CD4-positive, alpha-beta T cell (primary cell): ENCODE measurements at regions of chr5 and their contacts with region 1.

Region 1: DNA sequence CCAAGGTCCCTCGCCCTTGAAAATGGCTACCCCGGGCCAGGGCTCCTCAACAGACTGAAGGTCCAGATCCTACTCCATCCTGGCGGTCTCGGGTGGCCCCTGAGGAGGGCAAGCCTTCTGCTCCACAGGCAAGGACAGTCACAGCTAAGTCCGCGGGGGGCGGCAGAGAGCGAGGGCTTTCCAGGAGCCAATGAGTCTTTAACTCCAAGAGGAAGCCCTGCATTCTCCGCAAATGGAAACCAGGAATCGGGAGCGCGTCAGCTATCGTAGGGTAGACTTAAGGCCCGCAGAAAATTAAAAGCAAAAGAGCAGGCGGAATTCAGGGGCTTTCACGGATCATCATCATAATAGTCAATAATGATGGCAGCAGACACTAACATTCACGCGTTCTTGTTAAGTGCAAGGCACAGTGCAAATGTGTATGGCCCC is 87.8 kb upstream of the TNFAIP8 start:
- DNase-seq: peak; percentile 59 to 93 (median 74)
- ATAC-seq: peak; percentile 76
- H3K4me3 ChIP-seq: peak overlapping the region; percentile 69
- H3K4me3 Mint-ChIP-seq: peak overlapping the region; percentile 99
- H3K27ac ChIP-seq: peak overlapping the region; percentile 89 to 92
- H3K27ac Mint-ChIP-seq: peak overlapping the region; percentile 97
- H3K4me1 ChIP-seq: peaks cover 27% of the 10 kb centered on the region
- H3K4me1 Mint-ChIP-seq: peaks cover 76% of the 10 kb centered on the region
- H3K27me3 ChIP-seq: no peaks in the 10 kb centered on the region
- H3K27me3 Mint-ChIP-seq: no peaks in the 10 kb centered on the region
- CTCF ChIP-seq: peak; percentile 70

Region 2: DNA sequence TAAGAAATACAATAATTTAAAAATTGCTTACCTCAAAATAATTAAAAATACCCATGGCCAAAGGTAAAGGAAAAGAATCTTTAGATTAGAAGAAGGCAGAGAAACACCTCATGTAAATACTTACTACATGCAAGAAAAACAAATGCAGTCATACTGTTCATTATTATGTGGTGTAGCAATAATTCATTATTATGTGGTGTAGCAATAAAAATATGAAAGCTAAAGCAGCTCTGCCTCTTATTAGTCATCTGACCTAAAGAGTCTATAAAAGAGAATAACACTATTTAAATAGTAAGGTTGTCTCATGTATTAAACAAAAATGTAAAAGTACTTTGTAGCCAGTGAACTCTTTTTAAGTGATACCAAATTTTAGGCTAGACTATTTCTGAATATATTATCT is 286.2 kb before region 1 on chr5:
- CTCF ChIA-PET with region 1: no interaction called
- POLR2A ChIA-PET with region 1: no interaction called
- intact Hi-C with region 1: no loop called
- DNase-seq: no peak
- ATAC-seq: no peak
- H3K4me3 ChIP-seq: no peak overlapping the region
- H3K4me3 Mint-ChIP-seq: no peak overlapping the region
- H3K27ac ChIP-seq: no peak overlapping the region
- H3K27ac Mint-ChIP-seq: no peak overlapping the region
- H3K4me1 ChIP-seq: no peaks in the 10 kb centered on the region
- H3K4me1 Mint-ChIP-seq: peaks cover 26% of the 10 kb centered on the region
- H3K27me3 ChIP-seq: no peaks in the 10 kb centered on the region
- H3K27me3 Mint-ChIP-seq: no peaks in the 10 kb centered on the region
- CTCF ChIP-seq: no peak

Region 3: DNA sequence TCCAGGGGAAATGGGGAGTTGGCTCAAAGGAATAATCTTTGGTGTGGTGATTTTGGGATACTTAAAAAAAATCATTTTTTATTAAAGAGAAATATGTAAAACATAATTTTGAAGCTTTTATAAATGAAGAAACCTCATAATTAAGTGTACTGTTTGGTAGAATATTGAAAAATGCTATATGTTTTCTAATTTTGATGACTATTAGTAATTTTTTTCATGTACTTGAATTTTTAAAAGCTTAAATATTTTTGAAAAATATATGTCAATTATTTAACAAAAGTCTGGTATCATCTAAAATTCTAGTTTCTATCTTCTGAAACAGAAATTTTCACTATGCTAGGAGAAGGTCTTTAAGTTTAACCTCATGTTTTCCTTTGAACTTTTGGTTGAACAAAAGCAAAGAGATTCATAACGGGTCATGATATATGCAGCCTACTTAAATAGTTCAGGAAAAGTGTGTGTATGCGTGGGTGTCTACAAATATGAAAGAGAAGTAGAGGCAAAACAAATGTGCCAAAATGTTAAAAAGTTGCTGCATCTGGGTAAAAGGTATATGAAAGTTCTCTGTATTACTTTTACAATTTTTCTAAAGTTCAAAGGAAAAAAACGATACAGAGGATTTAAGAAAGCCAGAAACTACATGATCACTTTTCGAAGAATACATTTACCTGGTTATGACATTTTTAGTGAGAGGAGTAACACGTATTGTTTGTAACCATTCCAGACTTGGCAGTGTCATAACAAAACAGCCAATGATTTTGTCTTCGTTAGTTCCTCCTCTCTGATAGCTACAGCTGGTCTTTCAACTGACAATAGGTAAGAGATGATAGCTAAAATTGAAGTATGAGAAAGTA is 29.5 kb before region 1 on chr5:
- CTCF ChIA-PET with region 1: interaction called, 4 read pairs
- POLR2A ChIA-PET with region 1: interaction called, 9 read pairs
- intact Hi-C with region 1: loop called in 1 of 2 experiments (anchors 2 kb)
- DNase-seq: peak in 3 of 14 experiments; percentile 6 to 40 (median 38)
- ATAC-seq: peak; percentile 94
- H3K4me3 ChIP-seq: no peak overlapping the region
- H3K4me3 Mint-ChIP-seq: peak overlapping the region; percentile 70
- H3K27ac ChIP-seq: peak overlapping the region in 1 of 2 donors; percentile 10
- H3K27ac Mint-ChIP-seq: peak overlapping the region; percentile 97
- H3K4me1 ChIP-seq: no peaks in the 10 kb centered on the region
- H3K4me1 Mint-ChIP-seq: peaks cover 42% of the 10 kb centered on the region
- H3K27me3 ChIP-seq: no peaks in the 10 kb centered on the region
- H3K27me3 Mint-ChIP-seq: no peaks in the 10 kb centered on the region
- CTCF ChIP-seq: no peak

Region 4: DNA sequence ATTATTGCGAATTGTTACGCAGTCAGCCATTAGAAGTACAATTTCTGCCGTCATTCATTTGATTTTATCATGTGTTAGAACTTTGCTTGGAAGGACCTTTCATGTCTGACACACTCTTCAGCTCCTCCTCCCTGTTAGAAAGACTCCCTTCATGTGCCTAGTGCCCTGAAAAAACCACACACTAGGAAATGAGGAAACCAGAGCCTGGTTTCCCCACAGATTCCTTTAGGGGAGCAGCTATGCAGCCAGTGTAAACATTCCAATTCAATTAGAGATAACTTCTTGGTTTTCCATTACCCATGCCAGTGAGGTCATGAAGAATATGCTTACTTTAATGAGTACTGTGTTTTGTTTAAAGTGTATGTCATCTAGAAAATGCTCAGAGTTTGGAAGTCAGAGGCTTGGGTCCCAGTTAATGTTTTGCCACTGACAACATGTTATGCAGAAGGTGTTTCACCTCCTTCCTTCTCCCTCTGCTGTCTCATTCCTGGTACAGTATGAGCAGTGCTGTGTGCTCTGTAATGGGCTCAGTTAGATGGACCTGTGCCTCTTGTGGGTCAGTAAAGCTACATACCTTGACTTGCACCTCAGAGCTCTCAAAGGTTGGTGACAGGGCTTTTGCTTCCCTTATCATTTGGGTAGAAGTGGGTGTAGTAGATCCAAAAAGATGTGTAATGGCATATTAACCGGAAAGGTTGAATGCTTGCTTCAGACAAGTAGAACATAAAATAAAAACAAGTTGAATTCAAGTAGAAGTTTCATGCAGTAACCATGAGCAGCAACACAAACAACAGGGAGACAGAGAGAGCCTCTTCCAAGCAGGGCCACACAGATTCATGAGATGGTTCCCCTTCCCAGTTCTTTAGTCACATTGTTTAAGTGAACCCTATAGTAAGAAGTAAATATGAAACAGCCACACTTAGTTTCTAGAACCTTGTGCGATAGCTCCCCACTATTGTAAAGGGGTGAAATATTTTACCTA is 35.2 kb after region 1 on chr5:
- CTCF ChIA-PET with region 1: interaction called, 3 read pairs
- POLR2A ChIA-PET with region 1: interaction called, 116 read pairs
- intact Hi-C with region 1: loop called (anchors 2 kb)
- DNase-seq: peak in 2 of 14 experiments; percentile 56 to 58
- ATAC-seq: peak; percentile 76
- H3K4me3 ChIP-seq: no peak overlapping the region
- H3K4me3 Mint-ChIP-seq: peak overlapping the region; percentile 73
- H3K27ac ChIP-seq: peak overlapping the region; percentile 54 to 72
- H3K27ac Mint-ChIP-seq: peak overlapping the region; percentile 95
- H3K4me1 ChIP-seq: peaks cover 59% of the 10 kb centered on the region
- H3K4me1 Mint-ChIP-seq: peaks cover 96% of the 10 kb centered on the region
- H3K27me3 ChIP-seq: no peaks in the 10 kb centered on the region
- H3K27me3 Mint-ChIP-seq: no peaks in the 10 kb centered on the region
- CTCF ChIP-seq: no peak

Region 5: DNA sequence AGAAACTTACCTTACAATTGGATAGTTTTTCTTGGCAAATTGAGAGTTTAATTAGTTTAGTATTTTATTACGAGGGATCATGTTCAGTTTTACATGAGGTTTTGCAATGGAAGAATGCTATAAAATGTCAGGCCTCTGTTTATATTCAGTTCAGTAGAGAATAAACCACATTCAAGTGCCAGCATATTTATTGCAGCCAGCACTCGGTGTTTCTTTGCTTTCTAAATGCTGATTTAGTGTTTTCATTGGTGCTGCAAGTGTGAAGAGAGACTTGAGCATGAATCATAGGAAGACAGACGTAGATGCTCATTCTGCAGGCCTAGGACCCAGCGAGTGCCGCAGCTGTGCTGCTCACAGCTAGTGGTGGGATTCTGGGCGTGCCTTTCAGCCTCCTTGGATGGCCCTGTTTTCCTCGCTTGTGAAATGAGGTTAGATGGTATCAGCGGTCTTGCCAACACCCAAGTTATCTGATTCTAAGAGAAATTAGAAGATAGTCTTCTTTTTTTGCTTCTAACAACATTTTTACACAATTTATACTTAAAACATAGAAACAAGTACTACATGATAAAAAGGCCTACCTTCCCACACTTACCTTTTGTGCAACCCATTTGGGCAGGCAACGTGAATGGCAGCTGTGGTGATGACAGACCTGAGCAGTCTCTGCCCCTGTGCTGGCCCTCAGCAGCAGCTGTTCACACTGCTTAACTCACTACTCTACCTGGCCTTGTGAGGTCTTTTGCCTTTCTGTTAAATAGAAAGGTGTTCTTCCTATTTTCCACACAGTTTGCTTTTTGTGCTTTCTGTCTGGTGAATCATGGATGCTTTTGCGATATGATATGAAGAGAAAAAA is 61.0 kb after region 1 on chr5:
- CTCF ChIA-PET with region 1: interaction called, 3 read pairs
- POLR2A ChIA-PET with region 1: interaction called, 84 read pairs
- intact Hi-C with region 1: loop called (anchors 2 kb)
- DNase-seq: peak in 13 of 14 experiments; percentile 45 to 85 (median 67)
- ATAC-seq: peak; percentile 60
- H3K4me3 ChIP-seq: peak overlapping the region; percentile 13
- H3K4me3 Mint-ChIP-seq: peak overlapping the region; percentile 83
- H3K27ac ChIP-seq: peak overlapping the region; percentile 77 to 94
- H3K27ac Mint-ChIP-seq: peak overlapping the region; percentile 97
- H3K4me1 ChIP-seq: peaks cover 84% of the 10 kb centered on the region
- H3K4me1 Mint-ChIP-seq: peaks cover 94% of the 10 kb centered on the region
- H3K27me3 ChIP-seq: no peaks in the 10 kb centered on the region
- H3K27me3 Mint-ChIP-seq: no peaks in the 10 kb centered on the region
- CTCF ChIP-seq: no peak